Activated naive CD4-positive, alpha-beta T cell treated with anti-CD3 and anti-CD28 coated beads for 36 hours (primary cell): ENCODE measurements at regions of chr6 and their contacts with region 1.

Region 1: DNA sequence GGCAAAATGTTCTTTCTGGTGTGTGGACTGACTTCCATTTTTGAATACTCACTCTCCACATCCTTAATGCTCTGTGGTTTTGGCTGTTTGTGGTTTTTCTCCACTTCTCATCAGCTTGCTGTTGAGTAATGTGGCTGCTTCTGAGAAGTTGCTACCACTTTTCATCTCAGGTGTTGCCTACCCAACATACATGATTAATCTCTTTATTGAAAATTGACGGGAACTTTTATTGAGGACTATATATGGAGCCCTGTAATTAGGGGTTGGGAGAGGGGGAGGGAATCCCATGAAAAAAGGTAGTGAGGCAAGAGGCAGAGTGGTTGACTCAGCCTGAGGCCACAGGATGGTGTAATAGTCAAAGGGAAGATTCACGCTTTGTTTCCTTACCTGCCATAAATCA is 17.6 kb downstream of the IL22RA2 start:
- DNase-seq: peak; percentile 68
- H3K4me3 Mint-ChIP-seq: no peak overlapping the region
- H3K27ac Mint-ChIP-seq: peak overlapping the region; percentile 60
- H3K4me1 Mint-ChIP-seq: peaks cover 16% of the 10 kb centered on the region
- H3K27me3 Mint-ChIP-seq: peaks cover 13% of the 10 kb centered on the region

Region 2: DNA sequence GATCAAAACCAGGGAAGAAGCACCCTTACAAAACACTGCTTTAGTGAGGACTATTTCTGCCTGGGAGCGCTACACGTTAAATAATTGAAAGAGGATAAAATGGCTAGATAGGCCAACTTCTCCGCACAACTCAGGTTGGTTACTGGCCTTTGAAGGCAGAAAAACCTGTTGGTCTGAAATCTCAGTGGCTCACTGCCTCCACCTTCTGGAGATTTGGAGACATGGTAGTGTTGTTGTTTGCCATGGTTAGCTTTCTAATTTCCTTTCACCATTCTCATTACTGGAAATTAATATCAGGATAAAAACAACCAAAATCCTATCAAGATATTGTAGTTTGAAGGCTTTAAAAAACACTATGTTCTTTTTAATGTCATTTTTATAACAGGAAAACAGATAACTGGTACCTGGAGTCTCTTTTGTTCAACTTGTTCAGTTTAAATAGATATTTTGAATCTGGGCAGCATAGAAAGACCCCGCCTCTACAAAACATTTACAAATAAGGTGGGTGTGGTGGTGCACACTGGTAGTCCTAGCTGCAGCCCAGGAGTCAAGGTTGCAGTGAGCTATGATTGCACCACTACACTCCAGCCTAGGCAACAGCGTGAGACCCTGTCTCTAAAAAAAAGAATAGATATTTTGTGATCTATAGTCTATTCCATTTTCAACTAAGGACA is 838.7 kb before region 1 on chr6:
- CTCF ChIA-PET with region 1: no interaction called
- intact Hi-C with region 1: no loop called
- DNase-seq: peak; percentile 77
- H3K4me3 Mint-ChIP-seq: no peak overlapping the region
- H3K27ac Mint-ChIP-seq: no peak overlapping the region
- H3K4me1 Mint-ChIP-seq: no peaks in the 10 kb centered on the region
- H3K27me3 Mint-ChIP-seq: no peaks in the 10 kb centered on the region

Region 3: DNA sequence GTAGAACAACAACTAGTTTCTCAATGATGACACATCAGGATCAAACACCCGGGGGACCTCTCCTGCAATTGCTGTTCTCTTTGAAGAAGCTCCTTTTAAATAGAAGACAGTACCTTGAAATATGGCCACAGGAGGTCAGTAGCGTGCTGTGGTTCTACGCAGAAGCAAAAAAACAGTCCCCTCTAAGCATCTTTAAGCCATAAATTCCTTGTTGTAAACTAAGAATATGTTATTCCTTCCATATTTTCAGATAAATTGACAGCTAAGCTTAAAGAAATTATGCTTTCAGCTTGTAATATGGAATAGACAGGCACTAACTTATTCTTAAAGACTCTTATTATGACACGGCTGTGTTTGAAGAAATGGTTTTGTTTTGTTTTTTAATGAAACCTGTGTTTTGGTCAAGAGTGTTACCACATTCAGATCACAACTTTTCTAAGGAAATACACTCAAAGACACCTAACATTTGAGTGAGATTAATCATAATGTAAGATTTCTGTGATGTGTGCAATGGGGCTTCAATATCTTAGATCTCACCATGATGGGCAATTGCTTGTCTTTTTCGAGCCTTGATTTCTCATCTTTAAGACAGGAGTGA is 61.3 kb before region 1 on chr6:
- CTCF ChIA-PET with region 1: interaction called, 8 read pairs
- intact Hi-C with region 1: loop called (anchors 1 kb)
- DNase-seq: peak; percentile 75
- H3K4me3 Mint-ChIP-seq: no peak overlapping the region
- H3K27ac Mint-ChIP-seq: no peak overlapping the region
- H3K4me1 Mint-ChIP-seq: peaks cover 13% of the 10 kb centered on the region
- H3K27me3 Mint-ChIP-seq: peaks cover 3% of the 10 kb centered on the region

Region 4: DNA sequence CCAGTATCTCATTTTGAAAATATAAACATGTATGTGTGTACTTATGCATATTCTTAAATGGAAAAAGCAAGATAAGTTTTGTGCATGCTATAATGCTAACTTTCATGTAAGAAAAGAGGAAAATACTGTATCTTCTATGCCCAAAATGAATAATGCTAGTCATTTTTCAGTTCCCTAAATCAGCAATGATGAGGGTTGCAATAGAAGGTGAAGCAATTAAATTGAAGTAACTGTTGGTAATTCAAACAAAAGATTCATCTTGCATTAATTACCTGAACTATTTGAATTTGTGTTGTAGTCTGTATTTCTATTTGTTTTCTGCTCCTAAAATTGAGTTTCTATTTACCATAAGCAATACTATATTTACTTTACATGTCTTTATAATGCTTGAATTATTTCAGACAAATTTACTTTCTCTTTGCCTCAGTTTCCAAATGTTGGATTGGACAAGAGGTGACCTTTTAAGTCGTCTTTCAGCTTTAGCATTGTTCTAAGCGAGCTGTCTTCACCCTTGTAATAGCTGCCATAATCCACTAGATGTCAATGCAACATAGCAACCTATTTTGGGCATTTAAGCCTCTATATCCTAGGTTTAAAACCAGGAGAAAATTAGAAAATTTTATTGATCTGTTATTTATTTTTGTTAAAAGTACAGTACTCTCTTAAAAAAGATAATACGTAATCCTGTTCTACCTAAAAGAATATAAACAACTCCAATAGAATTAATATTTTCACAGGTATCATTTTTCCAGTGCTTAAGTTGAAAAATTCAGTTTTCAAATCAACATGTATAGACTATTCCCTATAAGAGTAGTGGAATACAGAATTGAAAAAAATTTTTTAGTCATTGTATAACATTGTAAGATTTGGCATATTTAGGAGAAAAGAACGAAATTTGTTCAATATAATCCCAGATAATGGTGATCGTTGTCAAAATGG is 115.7 kb after region 1 on chr6:
- CTCF ChIA-PET with region 1: no interaction called
- intact Hi-C with region 1: loop called (anchors 1 kb)
- DNase-seq: no peak
- H3K4me3 Mint-ChIP-seq: no peak overlapping the region
- H3K27ac Mint-ChIP-seq: no peak overlapping the region
- H3K4me1 Mint-ChIP-seq: no peaks in the 10 kb centered on the region
- H3K27me3 Mint-ChIP-seq: peaks cover 9% of the 10 kb centered on the region

Region 5: GRCh38 chr6:137389150-137389704 is 233.4 kb after region 1 on chr6:
- CTCF ChIA-PET with region 1: no interaction called
- intact Hi-C with region 1: loop called (anchors 1 kb)
- DNase-seq: peak; percentile 93
- H3K4me3 Mint-ChIP-seq: no peak overlapping the region
- H3K27ac Mint-ChIP-seq: peak overlapping the region; percentile 10
- H3K4me1 Mint-ChIP-seq: peaks cover 36% of the 10 kb centered on the region
- H3K27me3 Mint-ChIP-seq: no peaks in the 10 kb centered on the region

Region 6: DNA sequence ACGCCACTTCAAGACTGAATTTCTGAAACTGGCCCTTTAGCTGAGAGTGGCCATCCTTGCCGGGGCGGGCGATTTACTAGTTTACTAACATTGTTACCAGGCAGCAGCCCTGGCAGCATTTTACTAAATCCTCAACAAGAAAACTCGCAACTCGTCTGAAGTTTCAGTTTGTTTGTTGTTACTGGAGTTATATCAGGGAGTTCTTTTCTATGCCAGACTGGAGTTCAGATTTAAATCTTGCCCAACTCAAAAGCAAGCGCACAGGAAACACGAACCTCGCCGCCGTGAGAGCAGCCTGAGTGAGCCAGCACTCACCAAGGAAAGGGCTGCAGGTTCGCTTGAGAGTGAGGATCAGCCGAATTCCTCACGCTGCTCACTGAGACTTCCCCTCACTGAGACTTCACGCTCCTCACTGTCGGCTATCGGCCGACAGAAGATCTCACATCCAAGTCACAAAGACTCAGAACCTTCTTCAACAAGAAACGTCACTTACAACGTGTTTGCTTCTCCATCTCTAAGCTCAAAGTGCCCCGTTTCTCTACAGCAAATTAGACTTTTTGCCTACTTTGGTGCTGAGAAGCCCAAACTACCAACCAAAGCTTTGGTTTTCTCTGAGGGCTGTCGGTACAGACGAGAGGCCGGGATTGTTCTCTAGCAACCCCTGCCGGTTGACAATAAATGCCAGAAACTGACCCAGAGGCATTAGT is 259.4 kb after region 1 on chr6:
- CTCF ChIA-PET with region 1: no interaction called
- intact Hi-C with region 1: loop called (anchors 1 kb)
- DNase-seq: peak; percentile 80
- H3K4me3 Mint-ChIP-seq: peak overlapping the region; percentile 65
- H3K27ac Mint-ChIP-seq: no peak overlapping the region
- H3K4me1 Mint-ChIP-seq: peaks cover 11% of the 10 kb centered on the region
- H3K27me3 Mint-ChIP-seq: no peaks in the 10 kb centered on the region

Region 7: DNA sequence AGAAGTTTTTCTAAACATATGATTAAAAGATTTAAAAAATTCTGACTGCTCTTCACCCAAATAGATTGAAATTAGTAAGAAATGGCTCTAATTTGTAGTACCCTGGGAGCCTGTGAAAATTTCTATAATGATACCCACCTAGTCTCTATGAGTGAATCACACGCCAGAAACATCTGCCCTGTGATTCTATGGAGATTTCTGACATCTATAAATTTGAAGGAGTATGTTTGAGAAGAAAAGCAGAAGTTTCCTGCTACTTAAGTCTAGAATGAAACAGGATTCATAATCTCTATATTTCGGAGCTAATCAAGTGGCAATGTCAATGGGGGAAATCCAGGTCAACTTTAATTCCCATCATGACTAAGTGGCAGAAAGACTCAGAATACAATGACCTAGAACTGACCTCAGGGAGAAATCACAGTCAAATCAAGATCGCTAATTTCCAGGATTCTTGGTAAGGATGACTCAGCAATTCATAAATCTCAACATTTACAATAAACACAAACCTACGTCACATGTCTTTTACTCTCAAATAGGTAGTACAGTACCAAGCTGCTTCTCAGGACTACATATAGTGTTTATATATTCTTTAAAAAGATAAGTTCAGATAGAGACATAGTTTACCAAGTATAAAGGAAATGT is 525.0 kb after region 1 on chr6:
- CTCF ChIA-PET with region 1: no interaction called
- intact Hi-C with region 1: loop called (anchors 1 kb)
- DNase-seq: no peak
- H3K4me3 Mint-ChIP-seq: no peak overlapping the region
- H3K27ac Mint-ChIP-seq: peak overlapping the region; percentile 84
- H3K4me1 Mint-ChIP-seq: peaks cover 54% of the 10 kb centered on the region
- H3K27me3 Mint-ChIP-seq: peaks cover 8% of the 10 kb centered on the region